Endothelial cell of umbilical vein (primary cell): ENCODE measurements at regions of chr1 and their contacts with region 1.

Region 1: DNA sequence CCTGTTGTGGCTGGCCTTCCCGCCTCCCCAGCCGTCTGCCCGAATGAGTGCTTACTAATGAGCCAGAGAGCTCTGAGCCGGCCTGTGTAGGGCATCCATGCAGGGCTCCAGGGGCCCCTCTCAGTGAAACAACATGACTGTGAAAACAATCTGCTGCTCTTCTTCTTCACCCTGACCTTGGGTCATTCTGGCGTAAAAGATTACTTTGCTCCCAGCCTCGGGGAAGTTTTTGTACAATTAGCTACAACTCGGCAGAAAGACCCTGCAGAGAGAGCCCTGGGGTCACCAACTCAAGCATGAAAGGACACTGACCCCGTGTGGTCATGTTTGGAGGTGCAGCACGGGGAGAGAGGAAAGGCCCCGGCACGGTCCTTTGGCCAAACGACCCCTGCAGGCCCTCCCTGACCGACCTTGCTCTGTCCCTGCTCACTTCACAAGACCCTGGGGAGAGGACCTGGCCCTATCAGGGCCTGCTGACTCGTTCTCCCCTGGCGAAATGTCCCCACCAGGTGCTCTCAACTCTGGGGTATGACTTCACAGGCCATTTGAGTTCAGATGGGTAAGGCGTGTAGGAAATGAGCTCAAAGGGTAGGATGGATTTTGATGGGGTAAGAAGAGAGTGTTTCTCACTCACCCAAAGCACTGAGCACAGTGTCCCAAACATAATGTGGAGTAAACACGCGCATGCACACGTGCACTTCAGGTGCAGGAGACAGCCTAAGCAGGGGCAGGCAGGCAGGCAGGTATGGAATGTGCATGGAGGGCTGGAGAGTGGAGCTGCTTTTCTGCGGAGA is 22.9 kb upstream of the FAM20B start:
- DNase-seq: peak; percentile 63
- H3K4me3 ChIP-seq: no peak overlapping the region
- H3K27ac ChIP-seq: no peak overlapping the region
- H3K4me1 ChIP-seq: no peaks in the 10 kb centered on the region
- H3K27me3 ChIP-seq: no peaks in the 10 kb centered on the region
- CTCF ChIP-seq: peak; percentile 93 to 96
- POLR2A ChIP-seq: no peak

Region 2: DNA sequence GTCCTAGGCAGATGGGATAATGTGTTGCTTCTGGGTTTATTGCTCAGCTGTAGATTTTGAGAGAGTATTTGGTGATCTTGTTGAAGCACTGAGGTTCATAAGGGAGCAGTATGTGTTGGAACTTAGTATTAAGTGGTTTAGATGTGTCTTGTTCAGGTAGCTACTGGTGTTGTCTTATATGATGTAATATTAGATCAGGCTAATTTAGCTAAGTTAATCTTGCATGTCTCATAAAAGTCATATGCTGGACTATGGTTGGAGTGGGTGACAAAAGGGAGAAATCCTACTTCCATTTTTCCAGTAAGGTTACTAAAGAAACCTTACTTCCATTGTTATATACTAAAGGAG is 702.4 kb before region 1 on chr1:
- CTCF ChIA-PET with region 1: interaction called, 29 read pairs
- POLR2A ChIA-PET with region 1: no interaction called
- dilution Hi-C with region 1: no loop called
- intact Hi-C with region 1: no loop called
- DNase-seq: no peak
- H3K4me3 ChIP-seq: no peak overlapping the region
- H3K27ac ChIP-seq: no peak overlapping the region
- H3K4me1 ChIP-seq: peaks cover 10% of the 10 kb centered on the region
- H3K27me3 ChIP-seq: no peaks in the 10 kb centered on the region
- CTCF ChIP-seq: no peak
- POLR2A ChIP-seq: no peak

Region 3: GRCh38 chr1:178532392-178532791 is 470.4 kb before region 1 on chr1:
- CTCF ChIA-PET with region 1: interaction called, 349 read pairs
- POLR2A ChIA-PET with region 1: no interaction called
- dilution Hi-C with region 1: no loop called
- intact Hi-C with region 1: loop called (anchors 1 kb)
- DNase-seq: peak; percentile 82
- H3K4me3 ChIP-seq: no peak overlapping the region
- H3K27ac ChIP-seq: no peak overlapping the region
- H3K4me1 ChIP-seq: no peaks in the 10 kb centered on the region
- H3K27me3 ChIP-seq: no peaks in the 10 kb centered on the region
- CTCF ChIP-seq: peak; percentile 87 to 89
- POLR2A ChIP-seq: no peak

Region 4: GRCh38 chr1:178749581-178750166 is 253.1 kb before region 1 on chr1:
- CTCF ChIA-PET with region 1: interaction called, 80 read pairs
- POLR2A ChIA-PET with region 1: interaction called, 3 read pairs
- dilution Hi-C with region 1: loop called (anchors 25 kb)
- intact Hi-C with region 1: no loop called
- DNase-seq: no peak
- H3K4me3 ChIP-seq: no peak overlapping the region
- H3K27ac ChIP-seq: no peak overlapping the region
- H3K4me1 ChIP-seq: no peaks in the 10 kb centered on the region
- H3K27me3 ChIP-seq: no peaks in the 10 kb centered on the region
- CTCF ChIP-seq: no peak
- POLR2A ChIP-seq: no peak

Region 5: GRCh38 chr1:178784131-178784536 is 218.6 kb before region 1 on chr1:
- CTCF ChIA-PET with region 1: interaction called, 21 read pairs
- POLR2A ChIA-PET with region 1: no interaction called
- dilution Hi-C with region 1: no loop called
- intact Hi-C with region 1: no loop called
- DNase-seq: peak; percentile 47
- H3K4me3 ChIP-seq: peak overlapping the region in 1 of 3 experiments; percentile 37
- H3K27ac ChIP-seq: peak overlapping the region; percentile 26
- H3K4me1 ChIP-seq: peaks cover 13% of the 10 kb centered on the region
- H3K27me3 ChIP-seq: no peaks in the 10 kb centered on the region
- CTCF ChIP-seq: no peak
- POLR2A ChIP-seq: no peak

Region 6: GRCh38 chr1:179016747-179017549 is 14.2 kb after region 1 on chr1:
- CTCF ChIA-PET with region 1: interaction called, 19 read pairs
- POLR2A ChIA-PET with region 1: no interaction called
- dilution Hi-C with region 1: no loop called
- intact Hi-C with region 1: no loop called
- DNase-seq: peak; percentile 45
- H3K4me3 ChIP-seq: no peak overlapping the region
- H3K27ac ChIP-seq: no peak overlapping the region
- H3K4me1 ChIP-seq: no peaks in the 10 kb centered on the region
- H3K27me3 ChIP-seq: peaks cover 3 to 4% of the 10 kb centered on the region in 2 experiments
- CTCF ChIP-seq: no peak
- POLR2A ChIP-seq: no peak

Region 7: GRCh38 chr1:179506199-179506598 is 503.4 kb after region 1 on chr1:
- CTCF ChIA-PET with region 1: no interaction called
- POLR2A ChIA-PET with region 1: no interaction called
- dilution Hi-C with region 1: no loop called
- intact Hi-C with region 1: no loop called
- DNase-seq: no peak
- H3K4me3 ChIP-seq: no peak overlapping the region
- H3K27ac ChIP-seq: no peak overlapping the region
- H3K4me1 ChIP-seq: no peaks in the 10 kb centered on the region
- H3K27me3 ChIP-seq: no peaks in the 10 kb centered on the region
- CTCF ChIP-seq: no peak
- POLR2A ChIP-seq: no peak